ENCODE measurements at regions of chr10 and their contacts with region 1.

Region 1: DNA sequence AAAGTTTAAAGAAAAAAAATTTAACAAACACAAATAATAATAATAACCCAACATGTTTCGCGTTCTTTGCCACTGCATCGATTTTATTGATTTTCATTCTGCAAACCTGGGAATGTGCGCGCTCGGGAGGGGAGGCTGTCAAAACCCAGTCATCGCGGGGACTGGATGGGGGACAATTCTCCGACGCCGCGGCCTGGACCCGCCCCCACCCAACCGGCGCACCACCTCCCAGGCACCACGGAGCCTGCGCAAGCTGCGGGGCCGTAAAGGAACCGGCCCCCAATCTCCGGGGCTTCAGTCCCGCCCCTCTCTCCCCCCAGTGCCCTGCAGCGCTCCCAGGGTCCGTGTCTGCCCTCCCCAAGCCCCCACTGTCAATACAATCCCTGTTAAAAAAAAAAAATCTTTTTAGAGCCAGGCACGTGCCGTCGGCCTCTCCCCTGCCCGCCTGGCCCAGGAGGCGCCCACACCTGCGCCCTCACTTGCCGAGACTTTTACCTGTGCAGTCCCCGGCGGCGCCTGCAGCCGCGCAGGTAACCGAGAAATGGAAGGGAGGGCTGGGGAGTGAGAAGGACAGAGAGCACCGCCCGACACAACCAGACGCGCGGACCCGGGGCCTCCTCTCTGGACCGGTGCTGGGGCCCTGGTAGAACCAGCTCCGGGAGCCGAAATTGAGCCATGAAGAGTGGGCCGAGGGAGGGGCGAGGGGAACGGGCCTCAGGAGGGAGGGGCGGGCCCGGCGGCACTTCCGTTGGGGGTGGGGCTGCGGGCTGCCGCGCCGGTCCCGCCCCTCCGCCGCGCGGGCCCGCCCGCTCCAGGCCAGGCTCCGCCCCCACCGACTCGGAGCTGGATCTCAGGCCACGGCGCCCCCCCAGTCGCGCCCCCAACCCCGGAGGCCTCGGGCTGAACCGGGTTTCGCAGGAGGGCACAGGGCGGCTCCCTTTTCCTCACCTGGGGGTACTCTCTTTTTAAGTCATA is 7.6 kb upstream of the ZNF503 start:
- DNase-seq: peak; percentile 81
- H3K4me3 ChIP-seq: peak overlapping the region; percentile 68 to 82 (median 79)
- H3K27ac ChIP-seq: peak overlapping the region; percentile 40
- H3K4me1 ChIP-seq: peaks cover 49% of the 10 kb centered on the region
- H3K27me3 ChIP-seq: no peaks in the 10 kb centered on the region
- CTCF ChIP-seq: peak in 1 of 2 donors; percentile 42

Region 2: GRCh38 chr10:75358835-75359431 is 50.3 kb before region 1 on chr10:
- CTCF ChIA-PET with region 1: no interaction called
- dilution Hi-C with region 1: no loop called
- in situ Hi-C with region 1: no loop called
- intact Hi-C with region 1: no loop called
- DNase-seq: peak; percentile 94
- H3K4me3 ChIP-seq: no peak overlapping the region
- H3K27ac ChIP-seq: peak overlapping the region; percentile 53
- H3K4me1 ChIP-seq: peaks cover 23% of the 10 kb centered on the region
- H3K27me3 ChIP-seq: no peaks in the 10 kb centered on the region
- CTCF ChIP-seq: no peak

Region 3: DNA sequence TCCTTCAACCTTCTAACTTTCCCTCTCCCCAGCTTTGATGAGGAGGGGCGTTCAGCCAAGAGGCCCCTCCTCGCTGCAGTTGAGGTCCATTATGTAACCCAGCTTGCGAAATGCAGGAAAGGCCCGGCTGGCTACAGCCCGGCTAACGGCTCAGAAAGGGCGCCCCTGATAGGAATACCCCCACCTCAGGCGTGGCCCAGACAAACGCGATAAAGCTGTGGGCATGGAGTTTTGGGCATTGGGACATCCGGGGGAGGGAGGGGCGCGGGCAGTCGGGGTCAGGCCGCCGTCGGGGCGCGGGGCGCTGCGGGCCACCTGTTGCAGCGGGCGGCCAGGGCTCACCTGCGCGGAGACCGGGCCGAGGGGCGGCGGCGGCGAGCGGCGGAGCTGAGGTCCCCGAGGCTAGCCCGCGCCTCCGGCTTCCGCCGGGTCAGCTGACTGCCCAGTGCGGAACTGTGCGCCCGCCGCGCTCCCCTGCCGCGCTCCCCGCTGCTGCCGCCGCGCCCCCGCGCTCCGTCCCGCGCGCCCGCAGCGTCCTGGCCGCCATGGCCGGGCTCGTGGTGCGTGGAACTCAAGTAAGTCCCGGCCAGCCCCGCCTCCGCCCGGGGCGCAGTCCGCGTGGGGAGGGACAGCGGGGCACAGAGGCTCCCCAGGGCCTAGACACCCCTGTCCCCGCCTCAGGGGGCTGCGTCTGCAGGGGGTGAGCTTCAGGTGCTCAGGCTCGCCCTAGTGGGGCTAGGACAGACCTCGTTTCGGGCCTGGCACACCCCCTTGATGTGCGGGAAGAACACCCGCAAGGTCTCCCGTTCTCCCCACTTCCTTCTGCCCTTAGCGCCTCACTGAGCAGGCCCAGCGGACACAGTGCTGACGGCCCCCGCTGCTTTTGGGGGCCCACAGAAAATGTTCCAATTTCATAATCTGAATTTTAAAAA is 22.2 kb after region 1 on chr10 and contains the start of gene LRMDA:
- CTCF ChIA-PET with region 1: no interaction called
- dilution Hi-C with region 1: no loop called
- in situ Hi-C with region 1: no loop called
- intact Hi-C with region 1: loop called (anchors 2 kb)
- DNase-seq: no peak
- H3K4me3 ChIP-seq: peak within 1 kb of the TSS in 2 of 3 experiments; percentile 19 to 25
- H3K27ac ChIP-seq: no peak within 1 kb of the TSS
- H3K4me1 ChIP-seq: peaks cover 45% of the 10 kb centered on the region
- H3K27me3 ChIP-seq: no peaks in the 10 kb centered on the region
- CTCF ChIP-seq: no peak
- total RNA-seq, gene LRMDA: 0.67 TPM in 1 of 2 donors, not detected in the other

Region 4: DNA sequence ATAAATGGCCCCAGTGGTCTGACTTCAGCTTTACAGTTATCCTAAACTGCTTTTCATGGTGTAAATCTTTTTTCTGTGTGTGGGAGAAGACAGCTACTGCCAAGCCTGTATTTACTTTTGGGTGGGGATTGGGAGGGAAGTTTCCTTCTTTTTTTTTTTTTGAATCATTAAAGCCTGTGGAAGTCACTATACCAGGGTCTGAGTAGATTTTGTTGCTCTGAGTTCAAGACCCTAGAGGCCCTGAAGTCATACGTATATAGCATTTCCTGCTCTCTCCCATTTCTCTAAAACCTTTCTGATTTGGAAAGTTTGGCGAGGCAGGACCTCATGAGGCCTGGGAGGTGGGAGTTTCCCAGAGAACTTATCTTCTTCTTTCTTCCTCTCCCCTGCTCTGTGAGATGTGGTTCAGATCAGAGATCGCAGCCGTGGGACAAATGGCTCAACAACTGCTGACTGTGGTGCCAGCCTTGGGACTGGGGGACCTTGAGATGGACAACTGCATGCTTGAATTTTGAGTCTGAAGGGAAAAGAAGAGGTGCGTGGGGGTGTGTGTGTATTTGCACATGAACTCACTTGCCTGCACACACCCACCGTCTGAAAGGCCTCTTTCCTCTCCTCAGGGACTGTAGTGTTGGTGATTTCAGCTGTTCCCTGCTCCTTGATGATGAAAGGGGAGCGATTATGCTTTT is 40.3 kb after region 1 on chr10:
- CTCF ChIA-PET with region 1: no interaction called
- dilution Hi-C with region 1: no loop called
- in situ Hi-C with region 1: no loop called
- intact Hi-C with region 1: no loop called
- DNase-seq: no peak
- H3K4me3 ChIP-seq: no peak overlapping the region
- H3K27ac ChIP-seq: no peak overlapping the region
- H3K4me1 ChIP-seq: no peaks in the 10 kb centered on the region
- H3K27me3 ChIP-seq: no peaks in the 10 kb centered on the region
- CTCF ChIP-seq: no peak

Region 5: DNA sequence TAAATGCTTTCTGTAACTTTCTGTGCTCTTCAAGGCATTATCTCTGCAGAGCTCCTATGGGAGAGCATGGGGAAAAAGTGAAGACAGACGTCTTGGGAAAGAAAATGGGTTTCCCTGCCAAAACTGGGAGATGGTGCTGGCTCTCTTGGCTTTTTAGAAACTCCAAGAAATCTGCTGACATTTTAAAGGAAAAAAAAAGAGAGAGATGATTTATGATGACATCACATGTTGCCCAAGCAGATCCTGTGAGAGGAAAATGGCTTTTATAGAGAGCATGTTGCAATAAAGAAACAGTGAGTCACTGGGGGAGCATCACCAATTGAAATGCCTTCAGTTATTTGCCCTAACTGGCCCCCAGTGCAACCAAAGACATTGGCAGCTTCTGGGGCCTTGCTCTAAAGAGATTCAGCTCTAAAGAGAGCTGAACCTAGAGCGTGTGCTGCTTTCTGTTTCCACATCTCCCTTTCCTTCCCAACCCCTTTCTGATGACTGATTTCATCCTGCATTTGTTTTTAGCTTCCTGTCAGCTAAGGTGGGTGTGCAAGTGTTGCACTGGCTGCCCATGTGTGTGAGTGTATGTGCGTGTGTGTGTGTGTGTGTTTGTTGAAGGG is 59.9 kb after region 1 on chr10:
- CTCF ChIA-PET with region 1: no interaction called
- dilution Hi-C with region 1: no loop called
- in situ Hi-C with region 1: no loop called
- intact Hi-C with region 1: loop called (anchors 2 kb)
- DNase-seq: peak; percentile 94
- H3K4me3 ChIP-seq: no peak overlapping the region
- H3K27ac ChIP-seq: peak overlapping the region; percentile 4
- H3K4me1 ChIP-seq: peaks cover 25% of the 10 kb centered on the region
- H3K27me3 ChIP-seq: no peaks in the 10 kb centered on the region
- CTCF ChIP-seq: no peak

Region 6: DNA sequence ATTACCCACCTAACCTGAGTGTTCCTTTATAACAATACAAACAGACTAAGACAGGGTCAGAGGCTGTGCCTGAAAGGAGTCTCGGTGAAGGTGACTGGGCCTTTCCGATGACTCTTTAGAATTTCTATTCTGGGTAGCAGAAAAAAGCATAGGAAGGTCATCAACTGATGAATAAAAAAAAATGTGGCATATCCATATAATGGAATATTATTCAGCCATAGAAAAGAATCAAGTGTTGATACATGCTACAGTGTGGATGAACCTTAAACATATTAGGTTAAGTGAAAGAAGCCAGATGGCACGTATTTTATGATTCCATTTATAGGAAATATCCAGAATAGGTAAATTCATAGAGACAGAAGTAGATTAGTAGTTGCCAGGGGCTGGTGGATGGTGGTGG is 105.6 kb after region 1 on chr10:
- CTCF ChIA-PET with region 1: no interaction called
- dilution Hi-C with region 1: no loop called
- in situ Hi-C with region 1: no loop called
- intact Hi-C with region 1: no loop called
- DNase-seq: no peak
- H3K4me3 ChIP-seq: no peak overlapping the region
- H3K27ac ChIP-seq: no peak overlapping the region
- H3K4me1 ChIP-seq: no peaks in the 10 kb centered on the region
- H3K27me3 ChIP-seq: no peaks in the 10 kb centered on the region
- CTCF ChIP-seq: no peak

Region 7: DNA sequence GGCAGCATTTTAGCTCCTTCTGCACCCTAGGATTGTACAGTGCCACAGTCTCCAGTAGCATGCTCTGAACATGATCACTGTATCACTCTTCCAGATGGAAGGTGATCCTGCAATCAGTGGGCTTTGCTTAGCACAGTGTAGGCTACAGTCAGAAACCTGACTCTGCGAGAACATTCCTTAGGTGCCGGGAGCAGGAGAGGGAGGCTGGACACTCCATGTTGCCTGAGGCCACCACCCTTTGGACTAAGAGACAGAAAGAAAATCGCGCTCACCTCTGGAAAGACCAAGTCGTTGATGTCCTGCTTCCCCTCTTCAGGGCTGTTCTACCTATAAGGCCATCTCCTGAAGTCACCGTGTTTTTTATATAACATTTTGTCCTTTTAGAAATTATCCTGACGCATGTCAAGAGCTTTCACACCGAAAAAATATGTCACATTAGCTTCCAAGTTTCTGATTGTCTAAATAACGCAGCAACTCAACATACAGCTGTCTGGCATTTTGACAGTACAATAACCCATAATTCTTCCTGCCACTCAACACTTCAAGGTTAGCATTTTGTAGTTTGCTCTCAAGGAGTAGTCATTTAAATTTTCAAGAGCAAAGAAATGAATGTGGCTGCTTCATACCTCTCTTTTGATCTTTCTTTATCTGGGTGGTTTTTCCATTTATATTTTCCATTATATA is 585.3 kb after region 1 on chr10:
- CTCF ChIA-PET with region 1: interaction called, 16 read pairs
- dilution Hi-C with region 1: no loop called
- in situ Hi-C with region 1: no loop called
- intact Hi-C with region 1: no loop called
- DNase-seq: no peak
- H3K4me3 ChIP-seq: no peak overlapping the region
- H3K27ac ChIP-seq: no peak overlapping the region
- H3K4me1 ChIP-seq: no peaks in the 10 kb centered on the region
- H3K27me3 ChIP-seq: no peaks in the 10 kb centered on the region
- CTCF ChIP-seq: no peak

Region 8: DNA sequence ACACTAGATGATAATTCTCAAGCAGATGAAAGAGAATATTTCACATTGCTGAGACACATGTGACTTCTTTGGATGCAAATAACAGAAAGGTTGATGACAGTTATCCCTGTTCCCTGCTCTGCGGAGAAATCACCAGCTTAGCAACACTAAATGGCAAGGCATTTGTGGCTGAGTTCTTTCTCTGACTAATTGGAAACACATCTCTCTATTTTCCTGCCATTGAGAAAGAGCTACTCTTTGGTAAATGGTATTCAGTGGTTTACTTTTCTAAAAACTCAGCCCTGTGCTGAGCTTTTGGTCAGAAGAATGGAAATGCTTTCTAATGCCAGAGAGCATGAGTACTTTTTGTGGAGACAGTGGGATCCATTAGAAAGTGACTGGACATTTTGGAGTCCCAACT is 793.6 kb after region 1 on chr10:
- CTCF ChIA-PET with region 1: no interaction called
- dilution Hi-C with region 1: no loop called
- in situ Hi-C with region 1: no loop called
- intact Hi-C with region 1: no loop called
- DNase-seq: no peak
- H3K4me3 ChIP-seq: no peak overlapping the region
- H3K27ac ChIP-seq: no peak overlapping the region
- H3K4me1 ChIP-seq: peaks cover 3% of the 10 kb centered on the region
- H3K27me3 ChIP-seq: no peaks in the 10 kb centered on the region
- CTCF ChIP-seq: no peak

Measured in mammary epithelial cell (primary cell).